Dorsolateral prefrontal cortex (tissue), 120 donors: ENCODE measurements at regions of chr5 and their contacts with region 1.

Region 1: DNA sequence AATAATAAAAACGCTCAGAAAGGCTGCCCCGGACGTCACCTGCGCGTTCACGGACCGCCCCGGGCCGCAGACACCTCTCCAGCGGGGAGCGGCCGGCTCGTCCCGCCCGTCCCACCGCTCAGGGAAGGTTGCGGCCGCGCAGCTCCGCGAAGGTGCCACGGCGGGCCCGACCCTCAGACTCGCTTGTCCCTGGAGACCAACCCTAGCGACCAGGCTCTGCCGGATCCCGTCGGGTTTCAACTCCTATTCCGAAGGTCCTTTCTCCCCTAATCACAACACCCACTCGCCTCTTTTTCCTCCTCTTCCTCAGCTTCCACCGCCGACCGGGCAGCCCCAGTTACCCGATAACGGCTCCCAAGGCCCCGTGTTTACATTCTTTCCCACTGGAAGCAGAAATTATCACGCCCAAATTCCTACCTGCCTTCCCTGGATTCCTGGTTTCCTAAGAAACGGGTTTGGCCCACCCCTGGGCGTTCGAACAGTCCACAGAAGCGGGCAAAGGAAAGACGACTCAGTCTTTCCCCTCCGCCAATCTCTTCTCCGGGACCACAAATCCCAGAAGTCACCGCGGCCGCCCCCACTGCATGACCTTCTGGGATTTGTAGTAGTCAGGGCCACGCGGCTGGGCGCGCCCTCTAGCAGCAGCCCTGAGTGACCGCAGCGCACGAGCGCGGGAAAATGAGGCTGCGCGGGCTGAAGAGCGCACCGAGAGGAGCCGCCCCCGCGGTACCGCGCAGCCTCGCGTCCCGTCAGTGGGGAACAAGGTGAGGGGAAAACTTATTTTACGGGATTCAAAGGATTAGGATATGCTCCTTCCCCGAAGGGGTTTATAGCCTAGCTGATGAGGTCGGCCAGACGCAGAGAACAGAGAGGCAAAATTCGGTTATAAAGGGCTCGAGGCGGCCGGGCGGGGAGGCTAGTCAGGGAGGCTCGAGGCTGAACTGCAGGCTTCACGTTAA is at the start of gene TTC33:
- DNase-seq: peak; percentile 96 to 99 (median 97)
- H3K4me3 ChIP-seq: peak within 1 kb of the TSS; percentile 63 to 98 (median 89)
- H3K27ac ChIP-seq: peak within 1 kb of the TSS; percentile 19 to 96 (median 91)
- H3K27me3 ChIP-seq: no peaks in the 10 kb centered on the region
- CTCF ChIP-seq: peak; percentile 46 to 95 (median 86)
- total RNA-seq, gene TTC33: 14.3 to 56.7 (median 40.2) TPM

Region 2: GRCh38 chr5:40653221-40654022 is 102.3 kb before region 1 on chr5:
- intact Hi-C with region 1: no loop called
- DNase-seq: no peak
- H3K4me3 ChIP-seq: no peak overlapping the region
- H3K27ac ChIP-seq: no peak overlapping the region
- H3K27me3 ChIP-seq: no peaks in the 10 kb centered on the region
- CTCF ChIP-seq: no peak

Region 3: GRCh38 chr5:40798012-40798855 is 42.5 kb after region 1 on chr5 and contains the start of gene PRKAA1:
- intact Hi-C with region 1: loop called in 1 of 2 experiments (anchors 1 kb)
- DNase-seq: peak; percentile 80 to 92 (median 86)
- H3K4me3 ChIP-seq: peak within 1 kb of the TSS; percentile 69 to 100 (median 94)
- H3K27ac ChIP-seq: peak within 1 kb of the TSS; percentile 75 to 98 (median 95)
- H3K27me3 ChIP-seq: no peaks in the 10 kb centered on the region
- CTCF ChIP-seq: peak in 54 of 56 donors; percentile 38 to 89 (median 68)
- total RNA-seq, gene PRKAA1: 30.2 to 83.2 (median 52.4) TPM

Region 4: DNA sequence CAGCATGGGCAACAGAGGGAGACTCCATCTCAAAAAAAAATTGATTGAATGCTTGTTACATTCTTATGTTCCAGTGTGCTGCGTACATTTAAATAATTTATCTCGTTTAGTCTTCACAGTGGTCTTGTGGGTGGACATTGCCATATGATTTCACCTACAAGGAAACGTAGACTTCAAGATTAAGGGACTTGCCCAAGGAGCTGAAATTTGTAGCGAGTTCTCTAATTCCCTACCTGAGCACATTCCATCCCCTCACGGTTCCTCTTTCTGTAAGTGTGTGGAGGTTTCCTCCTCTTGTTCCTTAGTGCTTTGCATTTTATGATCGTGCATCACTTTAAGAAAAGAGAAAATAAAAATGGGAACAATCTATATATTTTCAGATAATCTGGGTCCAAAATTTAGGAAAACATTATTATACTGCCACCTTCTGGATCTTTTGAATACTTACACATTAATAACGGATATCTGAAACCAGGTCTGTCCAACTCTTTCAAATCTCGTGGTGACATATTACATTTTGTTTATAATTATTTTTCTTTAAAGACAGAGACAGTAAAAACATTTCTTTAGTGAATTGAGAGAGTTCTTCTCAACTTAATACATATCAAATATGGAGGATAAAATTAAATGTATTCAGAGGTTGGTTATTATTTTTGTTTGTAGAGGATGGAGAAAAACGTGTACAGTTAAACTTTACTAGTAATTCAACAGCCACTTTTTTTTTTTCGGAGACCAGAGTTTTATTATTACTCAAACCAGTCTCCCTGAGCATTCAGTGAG is 123.7 kb after region 1 on chr5:
- intact Hi-C with region 1: loop called (anchors 5 kb)
- DNase-seq: no peak
- H3K4me3 ChIP-seq: peak overlapping the region in 16 of 59 donors; percentile 0 to 39 (median 19)
- H3K27ac ChIP-seq: no peak overlapping the region
- H3K27me3 ChIP-seq: peaks cover 0 to 2% (median 0%) of the 10 kb centered on the region in 45 donors
- CTCF ChIP-seq: peak; percentile 33 to 90 (median 68)

Region 5: GRCh38 chr5:41094873-41095272 is 339.2 kb after region 1 on chr5:
- intact Hi-C with region 1: no loop called
- DNase-seq: no peak
- H3K4me3 ChIP-seq: no peak overlapping the region
- H3K27ac ChIP-seq: no peak overlapping the region
- H3K27me3 ChIP-seq: peaks cover 0 to 4% (median 0%) of the 10 kb centered on the region in 45 donors
- CTCF ChIP-seq: no peak